Esophagus muscularis mucosa (tissue), 4 donors: ENCODE measurements at regions of chr15 and their contacts with region 1.

Region 1: DNA sequence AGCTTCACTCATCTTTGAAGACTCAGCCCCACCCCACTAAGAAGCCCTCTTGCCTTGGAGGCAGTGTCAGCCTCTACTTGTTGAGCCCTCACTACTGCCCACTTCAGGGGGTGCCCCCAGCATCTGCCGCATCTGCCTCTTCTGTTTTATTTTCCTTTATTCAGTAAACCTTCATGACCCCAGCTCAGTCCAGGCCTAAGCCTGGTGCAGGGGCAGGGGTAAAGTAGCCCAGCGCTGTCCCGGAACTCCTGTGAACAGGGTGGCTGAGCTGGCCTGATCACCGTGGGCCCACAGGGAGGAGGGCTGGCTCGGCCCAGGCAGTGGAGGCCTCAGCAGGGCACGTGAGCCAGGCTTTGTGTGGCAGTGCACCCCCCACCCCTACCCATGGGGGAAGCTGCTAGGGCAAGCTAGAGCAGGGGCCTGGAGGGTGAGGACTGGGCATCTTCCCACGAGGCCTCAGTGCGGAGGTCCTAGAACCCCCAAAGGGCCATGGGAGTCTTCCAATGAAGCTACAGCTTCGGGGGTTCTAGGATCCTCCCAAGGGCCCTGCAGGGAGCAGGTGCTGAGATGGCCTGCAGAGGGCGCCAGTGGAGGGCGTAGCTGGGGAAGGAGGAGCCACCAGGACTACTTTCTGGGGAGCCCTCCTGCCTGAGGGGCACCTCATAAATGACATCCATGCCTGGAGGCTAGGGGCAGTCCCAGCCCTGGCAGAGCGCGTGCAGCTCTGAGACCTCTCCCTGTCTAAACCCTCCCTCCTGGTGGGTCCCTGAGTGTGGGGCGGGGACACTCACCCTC is 36.0 kb downstream of the TSPAN3 start:
- DNase-seq: no peak
- H3K4me3 ChIP-seq: no peak overlapping the region
- H3K27ac ChIP-seq: no peak overlapping the region
- H3K4me1 ChIP-seq: peaks cover 0 to 13% (median 0%) of the 10 kb centered on the region in 4 donors
- H3K27me3 ChIP-seq: peaks cover 0 to 18% (median 0%) of the 10 kb centered on the region in 4 donors
- CTCF ChIP-seq: peak; percentile 36 to 60 (median 47)
- EP300 ChIP-seq: no peak
- POLR2A ChIP-seq: no peak

Region 2: GRCh38 chr15:76840830-76841460 is 193.9 kb before region 1 on chr15:
- intact Hi-C with region 1: no loop called
- DNase-seq: no peak
- H3K4me3 ChIP-seq: no peak overlapping the region
- H3K27ac ChIP-seq: no peak overlapping the region
- H3K4me1 ChIP-seq: peaks cover 0 to 10% (median 0%) of the 10 kb centered on the region in 4 donors
- H3K27me3 ChIP-seq: no peaks in the 10 kb centered on the region
- CTCF ChIP-seq: peak; percentile 16 to 55 (median 26)
- EP300 ChIP-seq: no peak
- POLR2A ChIP-seq: no peak

Region 3: DNA sequence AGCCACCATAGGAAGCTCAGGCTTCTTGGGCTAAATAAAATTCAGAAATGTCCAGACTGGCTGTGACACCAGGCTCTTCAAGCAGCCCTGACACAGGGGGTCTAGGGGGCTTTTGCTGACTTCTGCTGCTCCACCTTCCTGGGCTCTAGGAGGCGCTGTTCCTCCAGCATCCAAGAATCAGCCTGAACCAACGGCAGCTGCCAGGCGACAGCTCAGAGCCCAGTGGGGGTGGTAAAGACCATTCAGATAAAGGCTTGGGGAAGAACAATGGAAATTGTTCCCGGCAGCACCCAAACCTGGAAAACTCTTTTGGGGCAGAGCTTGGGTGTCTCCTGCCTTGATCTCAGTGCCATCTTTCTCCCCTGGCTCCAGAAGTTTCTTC is 61.5 kb before region 1 on chr15:
- intact Hi-C with region 1: loop called (anchors 5 kb)
- DNase-seq: no peak
- H3K4me3 ChIP-seq: peak overlapping the region in 1 of 4 donors; percentile 29
- H3K27ac ChIP-seq: peak overlapping the region in 2 of 4 donors; percentile 37 to 52
- H3K4me1 ChIP-seq: peaks cover 13 to 19% (median 17%) of the 10 kb centered on the region in 4 donors
- H3K27me3 ChIP-seq: no peaks in the 10 kb centered on the region
- CTCF ChIP-seq: peak in 2 of 3 experiments; percentile 17 to 39
- EP300 ChIP-seq: no peak
- POLR2A ChIP-seq: no peak

Region 4: DNA sequence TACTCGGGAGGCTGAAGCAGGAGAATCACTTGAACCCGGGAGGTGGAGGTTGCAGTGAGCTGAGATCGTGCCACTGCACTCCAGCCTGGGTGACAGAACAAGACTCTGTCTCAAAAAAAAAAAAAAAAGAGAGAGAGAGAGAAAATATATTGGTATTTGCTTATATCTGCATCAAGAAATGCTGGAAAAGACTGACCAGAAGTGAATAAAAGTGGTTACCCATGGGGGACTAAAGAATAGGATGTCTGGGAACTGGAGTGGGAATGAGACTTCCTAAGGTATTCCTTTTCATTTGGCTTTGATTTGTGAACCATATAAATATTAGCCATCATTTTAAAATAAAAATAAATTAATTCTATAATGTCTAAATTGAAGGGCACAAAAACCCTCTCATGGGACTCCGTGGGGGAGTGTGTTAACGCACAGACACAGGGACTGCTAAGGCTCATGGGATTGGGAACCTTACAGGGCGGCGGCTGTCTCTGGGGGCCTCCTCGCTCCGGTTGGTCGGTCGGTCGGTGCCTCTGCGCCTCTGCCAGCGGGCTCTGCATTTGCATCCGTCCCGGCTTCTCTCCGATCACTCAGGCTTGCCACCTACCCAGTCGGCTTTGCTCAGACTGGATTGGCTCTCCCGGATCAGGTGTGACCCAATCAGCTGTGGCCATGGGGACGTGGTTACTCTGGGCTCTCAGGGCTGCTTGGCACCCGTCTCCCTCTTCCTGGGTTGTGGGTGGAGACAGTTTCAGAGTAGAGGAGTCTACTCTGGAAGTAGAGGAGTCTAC is 48.7 kb after region 1 on chr15:
- intact Hi-C with region 1: no loop called
- DNase-seq: peak; percentile 91
- H3K4me3 ChIP-seq: peak overlapping the region; percentile 35 to 45 (median 38)
- H3K27ac ChIP-seq: peak overlapping the region in 3 of 4 donors; percentile 2 to 32 (median 21)
- H3K4me1 ChIP-seq: peaks cover 0 to 12% (median 11%) of the 10 kb centered on the region in 4 donors
- H3K27me3 ChIP-seq: no peaks in the 10 kb centered on the region
- CTCF ChIP-seq: no peak
- EP300 ChIP-seq: no peak
- POLR2A ChIP-seq: no peak